Caco-2 (cell line): ENCODE measurements at regions of chr18 and their contacts with region 1.

Region 1: GRCh38 chr18:47870605-47871004 is 59.9 kb downstream of the SMAD2 start:
- DNase-seq: no peak
- H3K4me3 ChIP-seq: no peak overlapping the region
- H3K4me3 Mint-ChIP-seq: no peak overlapping the region
- H3K27ac Mint-ChIP-seq: no peak overlapping the region
- H3K4me1 ChIP-seq: no peaks in the 10 kb centered on the region
- H3K4me1 Mint-ChIP-seq: no peaks in the 10 kb centered on the region
- H3K27me3 ChIP-seq: no peaks in the 10 kb centered on the region
- H3K27me3 Mint-ChIP-seq: no peaks in the 10 kb centered on the region
- CTCF ChIP-seq: no peak

Region 2: GRCh38 chr18:47901624-47902362 is 31.2 kb after region 1 on chr18:
- CTCF ChIA-PET with region 1: no interaction called
- POLR2A ChIA-PET with region 1: no interaction called
- intact Hi-C with region 1: no loop called
- DNase-seq: no peak
- H3K4me3 ChIP-seq: no peak overlapping the region
- H3K4me3 Mint-ChIP-seq: no peak overlapping the region
- H3K27ac Mint-ChIP-seq: no peak overlapping the region
- H3K4me1 ChIP-seq: no peaks in the 10 kb centered on the region
- H3K4me1 Mint-ChIP-seq: no peaks in the 10 kb centered on the region
- H3K27me3 ChIP-seq: no peaks in the 10 kb centered on the region
- H3K27me3 Mint-ChIP-seq: no peaks in the 10 kb centered on the region
- CTCF ChIP-seq: no peak

Region 3: GRCh38 chr18:47931718-47932103 is 61.1 kb after region 1 on chr18:
- CTCF ChIA-PET with region 1: no interaction called
- POLR2A ChIA-PET with region 1: no interaction called
- intact Hi-C with region 1: loop called (anchors 10 kb)
- DNase-seq: peak; percentile 32 to 50
- H3K4me3 ChIP-seq: peak overlapping the region; percentile 75
- H3K4me3 Mint-ChIP-seq: peak overlapping the region; percentile 72
- H3K27ac Mint-ChIP-seq: peak overlapping the region; percentile 73
- H3K4me1 ChIP-seq: 0 out of 2 replicates have a peak, but pooled peaks cover 8% of the 10 kb centered on the region
- H3K4me1 Mint-ChIP-seq: no peaks in the 10 kb centered on the region
- H3K27me3 ChIP-seq: no peaks in the 10 kb centered on the region
- H3K27me3 Mint-ChIP-seq: peaks cover 3% of the 10 kb centered on the region
- CTCF ChIP-seq: peak in 1 of 2 experiments; percentile 23